A673 (cell line): ENCODE measurements at regions of chr6 and their contacts with region 1.

Region 1: GRCh38 chr6:70221025-70221714 is 81.7 kb downstream of the COL9A1 start:
- DNase-seq: peak; percentile 59
- H3K4me3 ChIP-seq: no peak overlapping the region
- H3K27ac ChIP-seq: no peak overlapping the region
- H3K4me1 ChIP-seq: no peaks in the 10 kb centered on the region
- H3K27me3 ChIP-seq: peaks cover 20% of the 10 kb centered on the region
- CTCF ChIP-seq: peak; percentile 75

Region 2: GRCh38 chr6:70289299-70289698 is 68.1 kb after region 1 on chr6:
- CTCF ChIA-PET with region 1: interaction called, 3 read pairs
- POLR2A ChIA-PET with region 1: no interaction called
- intact Hi-C with region 1: loop called (anchors 5 kb)
- DNase-seq: peak; percentile 40
- H3K4me3 ChIP-seq: no peak overlapping the region
- H3K27ac ChIP-seq: no peak overlapping the region
- H3K4me1 ChIP-seq: no peaks in the 10 kb centered on the region
- H3K27me3 ChIP-seq: peaks cover 65% of the 10 kb centered on the region
- CTCF ChIP-seq: peak; percentile 48

Region 3: DNA sequence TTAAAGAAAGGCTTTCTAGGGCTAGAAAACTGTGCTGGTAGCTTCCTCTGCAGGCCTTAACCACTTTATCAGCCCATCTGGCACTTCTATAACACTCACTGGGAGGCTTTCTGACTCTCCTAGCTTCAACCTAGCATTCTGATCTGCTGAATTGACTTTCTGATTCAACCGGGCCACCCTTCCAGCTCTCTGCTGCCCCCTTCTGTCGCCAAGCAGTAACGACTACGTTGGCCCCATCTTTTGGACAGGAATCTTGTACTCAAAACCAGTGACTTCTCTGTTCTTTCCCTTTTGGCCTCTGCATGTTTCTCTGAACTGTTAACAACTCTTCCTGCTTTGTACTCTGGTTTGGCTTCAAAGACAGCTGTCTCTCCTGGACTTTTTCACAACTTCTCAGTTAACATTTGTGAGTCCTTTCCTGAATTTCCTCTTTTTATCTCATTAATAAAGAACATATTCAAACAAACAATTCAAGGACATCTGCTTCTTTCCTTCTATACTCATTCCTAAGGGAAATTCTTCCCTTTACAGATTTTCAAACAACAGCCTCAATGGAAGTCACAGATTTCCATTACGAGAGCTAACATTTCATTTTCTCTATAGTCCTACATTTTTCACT is 148.3 kb after region 1 on chr6:
- CTCF ChIA-PET with region 1: interaction called, 25 read pairs
- POLR2A ChIA-PET with region 1: no interaction called
- intact Hi-C with region 1: loop called (anchors 1 kb)
- DNase-seq: peak; percentile 84
- H3K4me3 ChIP-seq: no peak overlapping the region
- H3K27ac ChIP-seq: no peak overlapping the region
- H3K4me1 ChIP-seq: peaks cover 32% of the 10 kb centered on the region
- H3K27me3 ChIP-seq: peaks cover 22% of the 10 kb centered on the region
- CTCF ChIP-seq: peak; percentile 94

Region 4: GRCh38 chr6:70489393-70489792 is 268.2 kb after region 1 on chr6:
- CTCF ChIA-PET with region 1: no interaction called
- POLR2A ChIA-PET with region 1: no interaction called
- intact Hi-C with region 1: no loop called
- DNase-seq: no peak
- H3K4me3 ChIP-seq: no peak overlapping the region
- H3K27ac ChIP-seq: no peak overlapping the region
- H3K4me1 ChIP-seq: no peaks in the 10 kb centered on the region
- H3K27me3 ChIP-seq: no peaks in the 10 kb centered on the region
- CTCF ChIP-seq: no peak

Region 5: DNA sequence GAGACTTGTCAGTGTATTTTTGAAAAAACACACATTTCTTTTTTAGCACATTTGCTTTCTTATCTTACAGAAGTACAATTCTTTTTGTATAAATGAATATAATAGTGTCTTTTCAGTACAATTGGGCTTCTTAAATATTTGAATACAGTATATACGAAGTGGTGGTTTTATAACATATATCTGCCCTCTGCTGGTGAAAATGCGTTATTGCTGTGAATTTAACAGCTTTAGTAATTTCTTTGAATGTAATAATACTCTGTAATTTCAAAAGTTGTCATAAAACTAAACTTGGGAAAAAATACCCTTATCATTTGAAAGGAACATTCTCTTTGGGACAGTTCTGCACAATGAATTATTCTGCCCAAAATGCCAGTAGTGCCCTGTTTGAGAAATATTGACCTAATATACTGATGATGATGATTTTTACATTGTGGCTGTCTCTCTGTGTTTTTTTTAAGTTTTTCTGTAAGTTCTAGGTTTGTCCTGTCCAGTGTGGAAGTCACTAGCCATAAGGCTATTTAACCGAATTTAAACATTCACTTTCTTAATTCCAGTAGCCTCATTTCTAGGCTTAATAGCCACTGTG is 465.5 kb after region 1 on chr6:
- CTCF ChIA-PET with region 1: interaction called, 14 read pairs
- POLR2A ChIA-PET with region 1: no interaction called
- intact Hi-C with region 1: loop called (anchors 1 kb)
- DNase-seq: peak; percentile 52
- H3K4me3 ChIP-seq: no peak overlapping the region
- H3K27ac ChIP-seq: no peak overlapping the region
- H3K4me1 ChIP-seq: no peaks in the 10 kb centered on the region
- H3K27me3 ChIP-seq: no peaks in the 10 kb centered on the region
- CTCF ChIP-seq: peak; percentile 79

Region 6: GRCh38 chr6:70884074-70884983 is 663.2 kb after region 1 on chr6:
- CTCF ChIA-PET with region 1: interaction called, 7 read pairs
- POLR2A ChIA-PET with region 1: no interaction called
- intact Hi-C with region 1: loop called (anchors 2 kb)
- DNase-seq: peak; percentile 72
- H3K4me3 ChIP-seq: no peak overlapping the region
- H3K27ac ChIP-seq: no peak overlapping the region
- H3K4me1 ChIP-seq: no peaks in the 10 kb centered on the region
- H3K27me3 ChIP-seq: no peaks in the 10 kb centered on the region
- CTCF ChIP-seq: peak; percentile 92